Activated T-helper 1 cell treated with anti-CD3 and anti-CD28 coated beads, Interleukin-12 subunit alpha, Interleukin-12 subunit beta, Interleukin-2, Interleukin-4 antibody, amounts not matched to agents 30 ng/mL and 10 ng/mL and 1 ng/mL, durations not matched to agents 14 hours and 24 hours and 36 hours (primary cell): ENCODE measurements at regions of chr7 and their contacts with region 1.

Region 1: GRCh38 chr7:24757353-24758275 is at the start of gene GSDME:
- DNase-seq: peak; percentile 21
- H3K4me3 Mint-ChIP-seq: peak within 1 kb of the TSS; percentile 91
- H3K27ac Mint-ChIP-seq: peak within 1 kb of the TSS; percentile 84
- H3K4me1 Mint-ChIP-seq: peaks cover 38% of the 10 kb centered on the region
- H3K27me3 Mint-ChIP-seq: peaks cover 44% of the 10 kb centered on the region
- total RNA-seq, gene GSDME: 10.6 and 11.0 TPM in 2 replicates

Region 2: DNA sequence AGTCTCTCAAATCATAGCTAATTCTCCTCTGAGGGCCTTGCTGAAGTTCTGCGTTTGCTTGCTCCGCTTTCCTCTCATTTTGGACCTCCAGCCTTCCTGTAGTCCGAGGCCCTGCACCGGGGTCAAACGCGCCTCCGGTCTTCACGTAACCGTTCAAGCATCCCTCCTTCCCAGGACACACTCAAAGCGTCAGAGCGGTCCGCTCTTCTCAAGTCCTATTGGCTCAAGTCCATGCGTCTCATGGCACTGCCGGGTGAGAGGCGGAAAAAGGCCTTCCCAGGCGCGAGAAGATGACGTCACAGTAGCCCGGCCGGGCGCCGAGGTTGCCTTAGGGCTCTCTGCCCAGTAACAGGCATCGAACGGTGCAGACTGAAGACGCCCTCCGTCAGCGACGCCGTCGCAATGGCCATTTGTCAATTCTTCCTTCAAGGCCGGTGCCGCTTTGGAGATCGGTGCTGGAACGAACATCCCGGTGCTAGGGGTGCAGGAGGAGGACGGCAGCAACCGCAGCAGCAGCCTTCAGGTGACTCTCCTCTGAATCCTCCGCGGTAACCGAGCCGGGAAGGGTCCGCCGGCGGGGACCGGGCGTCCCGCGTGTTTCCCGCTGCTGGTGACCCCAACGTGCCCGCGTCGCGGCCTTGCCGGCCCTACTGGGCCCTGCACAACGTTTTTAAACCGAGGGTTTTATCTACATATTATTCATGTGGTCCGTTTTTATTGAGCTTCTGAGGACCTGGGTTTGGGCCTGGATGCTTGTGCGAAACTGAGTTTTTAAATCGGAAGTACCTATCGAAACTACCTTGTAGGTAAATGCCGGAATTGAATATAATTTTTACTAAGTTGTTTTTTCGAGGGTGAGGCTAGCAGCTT is 1575.7 kb before region 1 on chr7 and contains the start of gene NUP42:
- intact Hi-C with region 1: loop called (anchors 2 kb)
- DNase-seq: peak; percentile 96
- H3K4me3 Mint-ChIP-seq: peak within 1 kb of the TSS; percentile 90
- H3K27ac Mint-ChIP-seq: peak within 1 kb of the TSS; percentile 99
- H3K4me1 Mint-ChIP-seq: peaks cover 35% of the 10 kb centered on the region
- H3K27me3 Mint-ChIP-seq: peaks cover 8% of the 10 kb centered on the region
- total RNA-seq, gene NUP42: 52.7 and 55.2 TPM in 2 replicates

Region 3: DNA sequence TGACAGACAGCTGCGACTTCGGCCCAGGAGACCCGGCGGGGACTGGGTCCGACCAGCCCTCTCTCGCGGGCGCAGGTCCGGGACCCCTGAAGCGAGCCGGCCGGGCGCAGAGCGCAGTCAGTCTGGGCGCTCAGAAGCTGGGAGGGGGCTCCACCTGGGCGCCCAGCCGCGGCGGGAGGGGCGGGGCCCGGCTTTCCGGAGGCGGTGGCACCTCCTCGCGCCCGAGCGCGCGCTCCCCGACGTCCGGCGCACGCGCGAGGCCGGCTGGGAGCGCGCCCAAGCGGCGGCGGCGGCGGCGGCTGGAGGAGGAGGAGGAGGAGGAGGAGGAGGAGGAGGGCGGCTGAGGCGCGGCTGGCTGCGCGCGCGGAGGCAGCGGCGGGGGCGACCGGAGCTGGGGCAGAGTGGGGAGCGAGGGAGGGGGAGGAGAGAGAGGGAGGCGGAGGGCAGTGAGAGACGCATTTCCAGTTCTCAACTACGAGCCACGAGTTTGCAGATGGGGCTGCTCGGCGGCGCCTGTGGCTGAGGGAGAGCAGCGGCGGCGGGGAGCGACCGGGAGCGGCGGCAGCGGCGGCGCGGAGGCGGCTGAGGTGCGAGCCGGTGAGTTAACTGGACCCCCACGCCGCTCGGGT is 184.5 kb before region 1 on chr7 and contains the start of gene PALS2:
- intact Hi-C with region 1: loop called (anchors 2 kb)
- DNase-seq: peak; percentile 77
- H3K4me3 Mint-ChIP-seq: peak within 1 kb of the TSS; percentile 94
- H3K27ac Mint-ChIP-seq: peak within 1 kb of the TSS; percentile 84
- H3K4me1 Mint-ChIP-seq: peaks cover 29% of the 10 kb centered on the region
- H3K27me3 Mint-ChIP-seq: peaks cover 41% of the 10 kb centered on the region
- total RNA-seq, gene PALS2: 34.9 and 42.2 TPM in 2 replicates

Region 4: DNA sequence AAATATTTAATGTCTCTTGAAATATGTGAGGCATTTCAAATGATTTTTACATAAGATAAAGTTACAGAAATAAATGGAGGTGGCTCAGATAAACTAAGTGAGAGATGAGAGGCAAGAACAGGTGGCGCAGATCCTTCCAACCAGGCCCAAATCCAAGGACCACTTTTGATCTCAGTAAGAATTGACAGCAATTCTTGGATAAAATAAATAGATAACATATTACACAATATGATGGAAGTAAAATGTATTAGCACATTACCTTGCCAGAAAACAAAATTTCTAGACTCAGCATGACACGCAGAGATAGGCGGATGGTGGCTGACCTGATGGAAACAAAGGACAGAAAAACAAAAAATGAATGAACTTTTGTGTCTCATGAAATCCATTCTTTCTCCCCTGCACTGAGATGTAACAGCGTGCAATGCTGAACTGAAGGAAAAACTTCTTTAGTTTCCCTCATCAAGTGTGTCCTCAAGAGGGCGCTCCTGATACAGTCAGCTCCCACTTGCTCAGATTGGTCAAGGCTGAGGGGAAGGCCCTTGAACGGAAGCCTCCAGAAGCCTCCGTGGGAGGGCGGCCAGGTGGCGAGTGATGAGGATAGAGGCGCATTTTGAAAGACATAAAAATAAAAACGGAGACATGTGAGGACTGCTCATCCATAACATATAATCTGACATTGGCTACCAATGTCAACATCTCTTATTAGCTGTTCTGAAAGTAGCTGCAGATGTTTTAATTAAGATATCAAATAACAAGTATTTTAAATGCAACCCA is 62.5 kb after region 1 on chr7:
- intact Hi-C with region 1: loop called (anchors 1 kb)
- DNase-seq: peak; percentile 75
- H3K4me3 Mint-ChIP-seq: peak overlapping the region; percentile 73
- H3K27ac Mint-ChIP-seq: peak overlapping the region; percentile 98
- H3K4me1 Mint-ChIP-seq: peaks cover 54% of the 10 kb centered on the region
- H3K27me3 Mint-ChIP-seq: peaks cover 2% of the 10 kb centered on the region

Region 5: GRCh38 chr7:24922099-24922773 is 164.6 kb after region 1 on chr7:
- intact Hi-C with region 1: loop called (anchors 5 kb)
- DNase-seq: no peak
- H3K4me3 Mint-ChIP-seq: peak overlapping the region; percentile 3
- H3K27ac Mint-ChIP-seq: peak overlapping the region; percentile 91
- H3K4me1 Mint-ChIP-seq: peaks cover 95% of the 10 kb centered on the region
- H3K27me3 Mint-ChIP-seq: no peaks in the 10 kb centered on the region

Region 6: DNA sequence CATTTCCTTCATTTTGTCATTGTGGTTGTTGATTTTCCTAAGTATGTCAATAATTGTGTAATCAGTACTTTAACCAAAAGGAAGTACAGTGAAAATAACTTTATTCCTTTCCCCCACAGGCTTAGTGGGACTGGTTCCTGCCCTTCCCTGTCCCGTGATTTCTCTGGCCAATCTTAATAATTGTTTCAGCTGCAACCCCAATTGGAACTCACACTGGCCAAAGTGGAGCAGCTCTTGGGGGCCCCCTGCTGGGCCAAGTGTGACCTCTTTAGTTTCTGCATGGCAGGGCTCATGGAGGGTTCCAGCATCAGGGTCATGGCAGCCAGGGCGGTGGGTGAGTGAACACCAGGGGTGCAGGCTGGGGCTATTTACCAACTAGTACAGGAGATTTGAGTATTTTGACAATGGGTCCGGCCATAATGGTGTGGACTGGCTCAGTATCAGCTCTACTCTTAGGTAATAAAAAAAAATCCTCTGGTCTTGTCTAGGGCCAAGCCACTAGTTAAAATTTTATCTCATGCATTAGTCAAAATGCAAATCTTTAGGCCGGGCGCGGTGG is 335.7 kb after region 1 on chr7:
- intact Hi-C with region 1: loop called (anchors 2 kb)
- DNase-seq: peak; percentile 67
- H3K4me3 Mint-ChIP-seq: no peak overlapping the region
- H3K27ac Mint-ChIP-seq: no peak overlapping the region
- H3K4me1 Mint-ChIP-seq: peaks cover 18% of the 10 kb centered on the region
- H3K27me3 Mint-ChIP-seq: peaks cover 18% of the 10 kb centered on the region